MCF 10A (cell line): ENCODE measurements at regions of chr2 and their contacts with region 1.

Region 1: GRCh38 chr2:163735685-163736432 is at the start of gene FIGN:
- DNase-seq: peak; percentile 79
- H3K4me3 Mint-ChIP-seq: peak within 1 kb of the TSS; percentile 86
- H3K27ac Mint-ChIP-seq: peak within 1 kb of the TSS; percentile 95
- H3K4me1 Mint-ChIP-seq: peaks cover 14% of the 10 kb centered on the region
- H3K27me3 Mint-ChIP-seq: no peaks in the 10 kb centered on the region
- CTCF ChIP-seq: no peak
- total RNA-seq, gene FIGN: 9.0 and 11.7 TPM in 2 replicates

Region 2: GRCh38 chr2:163471947-163472346 is 263.9 kb before region 1 on chr2:
- CTCF ChIA-PET with region 1: interaction called, 4 read pairs
- POLR2A ChIA-PET with region 1: interaction called, 3 read pairs
- intact Hi-C with region 1: loop called (anchors 2 kb)
- DNase-seq: peak; percentile 29
- H3K4me3 Mint-ChIP-seq: no peak overlapping the region
- H3K27ac Mint-ChIP-seq: no peak overlapping the region
- H3K4me1 Mint-ChIP-seq: peaks cover 6% of the 10 kb centered on the region
- H3K27me3 Mint-ChIP-seq: no peaks in the 10 kb centered on the region
- CTCF ChIP-seq: peak; percentile 60

Region 3: DNA sequence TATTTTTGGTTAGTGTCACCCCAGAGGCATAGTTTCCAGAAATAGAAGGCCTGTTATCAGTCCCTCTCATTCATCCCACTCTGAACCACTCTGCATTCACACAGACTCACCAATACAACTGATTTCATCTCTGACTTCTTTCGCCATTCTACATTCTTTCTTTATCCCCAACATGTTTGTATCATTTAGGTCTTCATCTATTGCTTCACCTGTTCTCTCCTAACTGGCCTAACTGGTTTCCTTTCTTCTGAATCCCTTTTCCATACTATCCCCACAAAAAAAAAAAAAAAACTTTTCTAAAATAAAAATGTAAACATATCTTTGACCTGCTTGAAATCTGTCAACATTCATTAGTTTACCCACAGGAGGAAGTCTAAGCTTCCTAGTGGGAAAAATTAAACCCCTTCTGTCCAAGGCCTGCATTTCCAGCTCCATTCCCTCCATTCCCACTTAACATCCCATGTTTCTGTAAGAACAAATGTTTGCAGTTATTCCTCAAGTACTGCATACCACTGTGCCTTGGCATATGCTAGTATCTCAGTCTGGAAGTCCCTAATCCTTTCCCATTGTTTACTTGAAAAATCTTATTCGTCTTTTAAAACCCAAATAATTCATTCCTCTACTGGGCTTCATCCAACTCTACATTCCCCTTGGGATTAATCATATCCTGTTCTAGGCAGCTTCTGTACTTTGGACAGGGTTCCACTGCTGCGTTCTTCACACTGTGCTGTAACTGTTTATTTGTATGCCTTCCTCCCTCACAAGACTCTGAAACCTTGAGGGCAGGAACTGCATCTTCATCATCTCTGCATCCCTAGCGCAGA is 68.6 kb before region 1 on chr2:
- CTCF ChIA-PET with region 1: no interaction called
- POLR2A ChIA-PET with region 1: interaction called, 4 read pairs
- intact Hi-C with region 1: loop called (anchors 5 kb)
- DNase-seq: peak; percentile 89
- H3K4me3 Mint-ChIP-seq: peak overlapping the region; percentile 15
- H3K27ac Mint-ChIP-seq: peak overlapping the region; percentile 95
- H3K4me1 Mint-ChIP-seq: peaks cover 52% of the 10 kb centered on the region
- H3K27me3 Mint-ChIP-seq: no peaks in the 10 kb centered on the region
- CTCF ChIP-seq: no peak

Region 4: DNA sequence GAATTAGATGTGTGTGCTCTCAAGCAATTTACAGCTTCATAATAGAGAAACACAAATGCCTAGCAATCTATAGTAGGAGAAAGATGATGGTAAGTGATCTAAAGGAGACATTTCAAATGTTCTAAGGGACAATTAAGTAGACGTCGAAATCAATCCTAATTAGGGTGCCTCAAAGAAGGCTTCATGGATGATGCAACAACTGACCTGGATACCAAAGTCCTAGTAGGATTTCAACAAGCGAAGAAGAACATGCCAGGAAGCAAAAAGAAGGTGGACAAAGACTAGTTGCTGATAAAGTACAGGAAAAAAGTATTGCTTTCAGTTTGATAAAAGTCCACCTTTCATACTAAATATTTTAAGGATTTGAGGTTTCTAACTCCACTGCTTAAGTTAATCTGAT is 12.5 kb before region 1 on chr2:
- CTCF ChIA-PET with region 1: interaction called, 5 read pairs
- POLR2A ChIA-PET with region 1: interaction called, 24 read pairs
- intact Hi-C with region 1: no loop called
- DNase-seq: no peak
- H3K4me3 Mint-ChIP-seq: no peak overlapping the region
- H3K27ac Mint-ChIP-seq: no peak overlapping the region
- H3K4me1 Mint-ChIP-seq: peaks cover 5% of the 10 kb centered on the region
- H3K27me3 Mint-ChIP-seq: no peaks in the 10 kb centered on the region
- CTCF ChIP-seq: no peak

Region 5: GRCh38 chr2:163778044-163778781 is 42.4 kb after region 1 on chr2:
- CTCF ChIA-PET with region 1: no interaction called
- POLR2A ChIA-PET with region 1: interaction called, 6 read pairs
- intact Hi-C with region 1: loop called (anchors 2 kb)
- DNase-seq: peak; percentile 93
- H3K4me3 Mint-ChIP-seq: peak overlapping the region; percentile 35
- H3K27ac Mint-ChIP-seq: peak overlapping the region; percentile 3
- H3K4me1 Mint-ChIP-seq: peaks cover 45% of the 10 kb centered on the region
- H3K27me3 Mint-ChIP-seq: no peaks in the 10 kb centered on the region
- CTCF ChIP-seq: no peak

Region 6: GRCh38 chr2:163800951-163801381 is 65.1 kb after region 1 on chr2:
- CTCF ChIA-PET with region 1: no interaction called
- POLR2A ChIA-PET with region 1: no interaction called
- intact Hi-C with region 1: no loop called
- DNase-seq: no peak
- H3K4me3 Mint-ChIP-seq: no peak overlapping the region
- H3K27ac Mint-ChIP-seq: no peak overlapping the region
- H3K4me1 Mint-ChIP-seq: no peaks in the 10 kb centered on the region
- H3K27me3 Mint-ChIP-seq: no peaks in the 10 kb centered on the region
- CTCF ChIP-seq: no peak

Region 7: DNA sequence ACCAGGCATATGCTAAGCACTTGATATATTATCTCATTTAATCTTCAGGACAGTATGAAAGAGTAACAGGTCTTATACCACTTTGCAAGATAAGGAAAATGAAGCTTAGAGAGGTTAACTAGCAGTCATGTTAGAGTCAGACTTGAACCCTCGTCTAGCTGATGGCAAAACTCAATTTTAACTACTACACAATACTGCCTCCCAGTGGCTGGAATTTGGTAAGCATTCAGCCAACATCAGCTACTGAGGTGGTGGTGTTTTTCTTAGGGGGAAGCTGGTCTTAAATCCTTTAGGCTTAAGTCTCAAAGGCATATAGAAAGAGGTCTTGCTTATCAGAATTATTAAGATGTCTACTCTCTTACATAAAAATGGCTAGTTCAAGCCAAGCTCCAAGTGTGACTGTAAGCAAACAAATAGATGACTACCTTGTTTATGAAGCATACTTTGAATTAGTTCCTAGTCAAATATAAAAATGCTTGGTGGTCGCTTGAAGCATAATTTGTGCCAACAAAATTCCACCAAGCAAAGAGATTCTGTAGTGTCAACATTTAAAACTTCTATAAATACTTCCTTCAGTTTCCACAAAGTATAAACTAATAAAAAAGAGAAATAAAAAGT is 325.4 kb after region 1 on chr2:
- CTCF ChIA-PET with region 1: interaction called, 5 read pairs
- POLR2A ChIA-PET with region 1: no interaction called
- intact Hi-C with region 1: loop called (anchors 2 kb)
- DNase-seq: peak; percentile 58
- H3K4me3 Mint-ChIP-seq: no peak overlapping the region
- H3K27ac Mint-ChIP-seq: no peak overlapping the region
- H3K4me1 Mint-ChIP-seq: no peaks in the 10 kb centered on the region
- H3K27me3 Mint-ChIP-seq: no peaks in the 10 kb centered on the region
- CTCF ChIP-seq: peak; percentile 80